Mammary epithelial cell (primary cell): ENCODE measurements at regions of chr2 and their contacts with region 1.

Region 1: DNA sequence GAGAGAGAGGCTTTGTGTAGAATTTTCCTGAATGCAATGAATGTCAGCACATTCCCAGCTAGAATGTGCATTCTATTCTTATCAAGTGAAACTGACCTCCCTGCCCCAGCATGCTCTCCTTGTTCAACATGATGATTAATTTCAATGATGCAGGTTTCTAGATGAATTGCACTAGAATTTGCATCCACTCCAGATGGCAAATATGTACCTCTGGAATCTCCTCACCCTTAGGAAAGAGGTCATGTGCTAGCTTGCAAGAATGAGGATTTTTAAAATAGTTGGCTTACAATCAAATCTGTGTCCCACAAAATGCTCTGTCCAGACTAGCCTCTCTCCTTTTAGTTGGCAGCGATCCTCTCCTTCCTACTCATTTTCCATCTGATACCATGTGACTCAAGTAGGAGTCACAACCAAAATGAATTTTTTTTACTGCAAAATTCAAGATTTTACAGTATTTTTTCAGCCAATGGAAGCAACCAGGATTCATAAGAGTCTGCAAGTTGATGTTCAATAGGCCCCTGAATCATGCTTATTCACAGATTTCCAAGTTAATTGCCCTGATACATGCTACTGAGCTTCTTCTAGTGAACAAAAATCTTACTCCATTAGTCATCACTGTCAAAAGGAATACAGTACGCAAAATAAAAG is 21.0 kb upstream of the STAT4 start:
- DNase-seq: peak; percentile 99
- H3K4me3 ChIP-seq: no peak overlapping the region
- H3K27ac ChIP-seq: peak overlapping the region; percentile 99
- H3K4me1 ChIP-seq: peaks cover 72% of the 10 kb centered on the region
- H3K27me3 ChIP-seq: no peaks in the 10 kb centered on the region
- CTCF ChIP-seq: no peak

Region 2: DNA sequence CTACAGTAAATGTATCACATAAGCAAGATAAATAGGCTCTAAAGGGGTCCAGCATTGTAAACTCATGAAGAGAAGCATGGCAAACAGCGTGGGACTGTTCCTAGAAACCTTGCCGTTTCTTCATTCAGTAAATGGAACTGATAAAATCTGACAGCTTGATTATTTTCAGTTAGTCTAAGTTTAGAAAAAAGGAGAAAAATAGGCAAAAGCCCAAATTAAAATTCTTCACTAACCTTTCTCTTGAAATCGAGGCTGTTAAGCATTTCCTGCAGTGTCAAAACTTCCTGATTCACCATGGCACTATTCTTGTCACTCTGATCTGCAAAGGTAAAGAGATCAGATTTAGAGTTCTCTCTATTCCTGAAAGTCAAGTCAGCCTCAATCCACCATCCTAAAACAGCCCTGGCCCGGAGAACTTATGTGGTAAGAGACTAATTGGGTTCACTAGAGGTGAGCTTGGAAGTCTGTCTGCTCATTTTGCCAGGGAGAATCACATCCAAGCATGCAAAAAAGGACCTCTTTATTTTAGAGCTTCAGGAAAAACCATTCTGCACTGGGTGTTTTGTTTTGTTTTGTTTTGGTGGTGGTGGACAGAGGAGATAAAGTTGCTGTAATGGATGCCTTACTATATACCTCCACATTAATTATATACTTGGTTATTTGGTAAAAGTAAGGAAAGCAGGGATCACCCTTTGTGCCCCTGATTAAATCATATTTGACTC is 105.5 kb before region 1 on chr2:
- CTCF ChIA-PET with region 1: no interaction called
- dilution Hi-C with region 1: no loop called
- in situ Hi-C with region 1: no loop called
- intact Hi-C with region 1: no loop called
- DNase-seq: no peak
- H3K4me3 ChIP-seq: no peak overlapping the region
- H3K27ac ChIP-seq: no peak overlapping the region
- H3K4me1 ChIP-seq: no peaks in the 10 kb centered on the region
- H3K27me3 ChIP-seq: no peaks in the 10 kb centered on the region
- CTCF ChIP-seq: no peak

Region 3: DNA sequence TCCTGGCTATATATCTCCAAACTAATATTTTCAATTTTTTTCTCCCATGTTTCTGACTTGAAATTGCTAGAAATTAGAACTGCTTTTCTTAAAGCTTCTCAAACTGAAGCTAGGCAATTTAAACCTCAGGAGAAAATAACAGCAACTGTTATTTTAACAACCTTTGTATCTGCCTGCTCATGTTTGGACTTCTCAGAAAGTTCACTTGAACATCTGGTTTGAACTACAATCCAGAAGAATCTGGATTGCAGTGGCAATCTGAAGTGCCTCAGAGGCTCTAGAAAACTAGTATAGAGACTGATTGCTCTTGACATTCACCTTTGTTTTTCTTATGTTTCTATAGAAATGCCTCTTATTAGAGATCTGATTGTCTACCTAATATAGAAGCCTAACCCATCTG is 85.1 kb before region 1 on chr2:
- CTCF ChIA-PET with region 1: no interaction called
- dilution Hi-C with region 1: no loop called
- in situ Hi-C with region 1: no loop called
- intact Hi-C with region 1: no loop called
- DNase-seq: no peak
- H3K4me3 ChIP-seq: no peak overlapping the region
- H3K27ac ChIP-seq: no peak overlapping the region
- H3K4me1 ChIP-seq: no peaks in the 10 kb centered on the region
- H3K27me3 ChIP-seq: no peaks in the 10 kb centered on the region
- CTCF ChIP-seq: no peak

Region 4: GRCh38 chr2:191202881-191203397 is 31.1 kb after region 1 on chr2:
- CTCF ChIA-PET with region 1: no interaction called
- dilution Hi-C with region 1: loop called (anchors 5 kb)
- in situ Hi-C with region 1: no loop called
- intact Hi-C with region 1: loop called (anchors 1 kb)
- DNase-seq: peak; percentile 71
- H3K4me3 ChIP-seq: no peak overlapping the region
- H3K27ac ChIP-seq: peak overlapping the region; percentile 100
- H3K4me1 ChIP-seq: peaks cover 18% of the 10 kb centered on the region
- H3K27me3 ChIP-seq: no peaks in the 10 kb centered on the region
- CTCF ChIP-seq: no peak

Region 5: GRCh38 chr2:191218292-191218898 is 46.6 kb after region 1 on chr2:
- CTCF ChIA-PET with region 1: no interaction called
- dilution Hi-C with region 1: no loop called
- in situ Hi-C with region 1: no loop called
- intact Hi-C with region 1: loop called (anchors 1 kb)
- DNase-seq: peak; percentile 46
- H3K4me3 ChIP-seq: no peak overlapping the region
- H3K27ac ChIP-seq: peak overlapping the region; percentile 88
- H3K4me1 ChIP-seq: peaks cover 52% of the 10 kb centered on the region
- H3K27me3 ChIP-seq: no peaks in the 10 kb centered on the region
- CTCF ChIP-seq: peak; percentile 62 to 64

Region 6: GRCh38 chr2:191231995-191232394 is 60.2 kb after region 1 on chr2:
- CTCF ChIA-PET with region 1: interaction called, 3 read pairs
- dilution Hi-C with region 1: no loop called
- in situ Hi-C with region 1: no loop called
- intact Hi-C with region 1: loop called (anchors 1 kb)
- DNase-seq: no peak
- H3K4me3 ChIP-seq: no peak overlapping the region
- H3K27ac ChIP-seq: no peak overlapping the region
- H3K4me1 ChIP-seq: peaks cover 25% of the 10 kb centered on the region
- H3K27me3 ChIP-seq: no peaks in the 10 kb centered on the region
- CTCF ChIP-seq: peak; percentile 44 to 57

Region 7: GRCh38 chr2:191352536-191352935 is 180.7 kb after region 1 on chr2:
- CTCF ChIA-PET with region 1: no interaction called
- dilution Hi-C with region 1: no loop called
- in situ Hi-C with region 1: no loop called
- intact Hi-C with region 1: loop called (anchors 2 kb)
- DNase-seq: peak; percentile 60
- H3K4me3 ChIP-seq: no peak overlapping the region
- H3K27ac ChIP-seq: peak overlapping the region; percentile 3
- H3K4me1 ChIP-seq: peaks cover 16% of the 10 kb centered on the region
- H3K27me3 ChIP-seq: no peaks in the 10 kb centered on the region
- CTCF ChIP-seq: no peak